ENCODE measurements at regions of chr3 and their contacts with region 1.

Region 1: GRCh38 chr3:69410250-69410649 is 24.4 kb upstream of the FRMD4B start:
- DNase-seq: peak; percentile 48
- ATAC-seq: peak; percentile 98
- H3K4me3 ChIP-seq: no peak overlapping the region
- H3K27ac ChIP-seq: no peak overlapping the region
- H3K4me1 ChIP-seq: no peaks in the 10 kb centered on the region
- H3K27me3 ChIP-seq: no peaks in the 10 kb centered on the region; a peak in 1 of 5 replicates
- CTCF ChIP-seq: peak; percentile 77
- EP300 ChIP-seq: no peak
- POLR2A ChIP-seq: no peak
- RAD21 ChIP-seq: no peak

Region 2: DNA sequence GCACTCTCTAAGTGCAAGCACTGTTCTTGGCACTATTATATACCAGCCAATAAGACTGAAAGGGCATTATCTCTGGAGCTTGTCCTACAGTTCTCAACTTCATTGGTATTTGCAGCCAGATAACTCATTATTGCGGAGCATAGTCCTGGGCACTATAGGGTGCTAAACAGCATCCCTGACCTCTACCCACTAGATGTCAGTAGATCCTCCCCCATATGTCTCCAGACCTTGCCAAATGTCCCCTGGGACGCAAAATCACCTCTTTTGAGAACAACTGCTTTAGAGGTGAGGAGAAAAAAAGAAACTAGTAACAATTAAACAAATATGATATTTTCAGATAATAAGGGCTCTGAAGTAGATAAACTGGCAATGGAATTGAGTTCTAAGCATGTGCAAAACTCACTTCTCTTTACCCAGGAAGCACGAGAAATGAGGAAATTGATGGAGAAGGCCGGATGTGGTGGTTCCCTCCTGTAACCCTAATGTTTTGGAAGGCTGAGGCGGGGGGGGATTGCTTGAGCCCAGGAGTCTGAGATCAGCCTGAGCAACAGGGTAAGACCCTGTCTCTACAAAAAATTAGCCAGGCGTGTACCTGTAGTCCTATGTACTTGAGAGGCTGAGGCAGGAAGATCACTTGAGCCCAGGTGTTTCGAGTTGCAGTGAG is 85.8 kb before region 1 on chr3:
- CTCF ChIA-PET with region 1: no interaction called
- POLR2A ChIA-PET with region 1: no interaction called
- in situ Hi-C with region 1: no loop called
- intact Hi-C with region 1: loop called (anchors 5 kb)
- DNase-seq: peak; percentile 7
- ATAC-seq: peak; percentile 91
- H3K4me3 ChIP-seq: no peak overlapping the region
- H3K27ac ChIP-seq: no peak overlapping the region
- H3K4me1 ChIP-seq: peaks cover 9% of the 10 kb centered on the region
- H3K27me3 ChIP-seq: no peaks in the 10 kb centered on the region; a peak in 1 of 5 replicates
- CTCF ChIP-seq: peak; percentile 47
- EP300 ChIP-seq: no peak
- POLR2A ChIP-seq: no peak
- RAD21 ChIP-seq: no peak